CD8-positive, alpha-beta T cell (primary cell): ENCODE measurements at regions of chr1 and their contacts with region 1.

Region 1: GRCh38 chr1:117059678-117060440 is at the start of gene TTF2:
- DNase-seq: peak; percentile 88 to 99 (median 93)
- ATAC-seq: peak; percentile 87
- H3K4me3 ChIP-seq: peak within 1 kb of the TSS; percentile 75
- H3K4me3 Mint-ChIP-seq: no peak within 1 kb of the TSS
- H3K27ac ChIP-seq: peak within 1 kb of the TSS; percentile 70 to 92
- H3K27ac Mint-ChIP-seq: no peak within 1 kb of the TSS
- H3K4me1 ChIP-seq: peaks cover 22% of the 10 kb centered on the region
- H3K4me1 Mint-ChIP-seq: peaks cover 39% of the 10 kb centered on the region
- H3K27me3 ChIP-seq: no peaks in the 10 kb centered on the region
- H3K27me3 Mint-ChIP-seq: no peaks in the 10 kb centered on the region
- CTCF ChIP-seq: no peak
- total RNA-seq, gene TTF2: 31.5 to 33.2 TPM

Region 2: DNA sequence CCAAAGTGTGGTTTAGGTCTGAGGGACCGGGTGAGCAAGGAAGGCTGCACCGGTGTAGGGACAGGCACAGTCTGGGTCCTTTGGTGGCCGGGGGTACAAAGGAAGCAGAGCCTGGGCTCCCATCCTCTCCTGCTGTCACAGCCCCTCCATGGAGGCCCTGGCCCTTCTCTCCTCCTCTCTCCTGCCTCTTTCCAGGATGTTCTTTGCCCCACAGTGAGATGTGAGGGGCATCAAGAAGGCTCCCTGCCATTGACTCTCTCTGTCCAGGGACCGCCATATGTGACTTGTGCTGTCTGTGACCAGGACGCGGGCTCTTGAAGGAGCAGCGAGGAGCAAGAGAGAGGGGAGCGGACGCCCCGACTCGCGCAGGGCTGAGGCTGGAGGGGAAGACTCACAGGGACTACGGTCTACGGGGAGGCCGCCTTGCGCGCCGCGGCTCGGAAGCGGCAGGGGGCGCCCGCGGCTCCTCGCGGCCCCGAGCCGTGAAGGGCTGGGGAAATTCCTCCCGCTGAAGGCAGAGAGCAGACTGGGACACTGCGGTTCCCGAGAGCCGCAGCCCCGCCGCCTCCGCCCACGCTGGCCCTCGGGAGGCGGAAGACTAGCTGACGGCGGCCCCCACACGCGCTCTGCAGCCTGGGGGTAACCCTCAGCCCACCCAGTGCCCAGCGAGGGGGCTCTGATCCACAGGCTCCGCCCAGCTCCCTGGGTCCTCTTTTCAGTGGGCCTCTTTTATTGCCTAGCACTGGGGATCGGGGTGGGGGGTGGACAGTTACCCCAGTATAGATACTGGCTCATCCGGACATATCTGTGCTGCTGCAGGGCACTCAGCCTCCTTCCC is 907.9 kb before region 1 on chr1:
- CTCF ChIA-PET with region 1: no interaction called
- POLR2A ChIA-PET with region 1: no interaction called
- intact Hi-C with region 1: loop called in 1 of 2 experiments (anchors 10 kb)
- DNase-seq: peak; percentile 58 to 93 (median 76)
- ATAC-seq: peak; percentile 91
- H3K4me3 ChIP-seq: peak overlapping the region; percentile 35 to 52
- H3K4me3 Mint-ChIP-seq: peak overlapping the region; percentile 79
- H3K27ac ChIP-seq: peak overlapping the region; percentile 17 to 46
- H3K27ac Mint-ChIP-seq: peak overlapping the region; percentile 92
- H3K4me1 ChIP-seq: peaks cover 26% of the 10 kb centered on the region
- H3K4me1 Mint-ChIP-seq: peaks cover 30% of the 10 kb centered on the region
- H3K27me3 ChIP-seq: no peaks in the 10 kb centered on the region
- H3K27me3 Mint-ChIP-seq: no peaks in the 10 kb centered on the region
- CTCF ChIP-seq: peak; percentile 93

Region 3: GRCh38 chr1:116724765-116725375 is 335.0 kb before region 1 on chr1:
- CTCF ChIA-PET with region 1: interaction called, 59 read pairs
- POLR2A ChIA-PET with region 1: interaction called, 9 read pairs
- intact Hi-C with region 1: loop called (anchors 1 kb)
- DNase-seq: peak; percentile 52 to 86 (median 81)
- ATAC-seq: peak; percentile 75
- H3K4me3 ChIP-seq: no peak overlapping the region
- H3K4me3 Mint-ChIP-seq: no peak overlapping the region
- H3K27ac ChIP-seq: no peak overlapping the region
- H3K27ac Mint-ChIP-seq: no peak overlapping the region
- H3K4me1 ChIP-seq: no peaks in the 10 kb centered on the region
- H3K4me1 Mint-ChIP-seq: peaks cover 15% of the 10 kb centered on the region
- H3K27me3 ChIP-seq: no peaks in the 10 kb centered on the region
- H3K27me3 Mint-ChIP-seq: no peaks in the 10 kb centered on the region
- CTCF ChIP-seq: peak; percentile 97

Region 4: GRCh38 chr1:116769561-116769977 is 290.3 kb before region 1 on chr1:
- CTCF ChIA-PET with region 1: interaction called, 5 read pairs
- POLR2A ChIA-PET with region 1: interaction called, 14 read pairs
- intact Hi-C with region 1: no loop called
- DNase-seq: peak in 8 of 9 experiments; percentile 44 to 94 (median 76)
- ATAC-seq: peak; percentile 75
- H3K4me3 ChIP-seq: peak overlapping the region in 1 of 2 experiments; percentile 14
- H3K4me3 Mint-ChIP-seq: peak overlapping the region; percentile 55
- H3K27ac ChIP-seq: peak overlapping the region; percentile 42 to 87
- H3K27ac Mint-ChIP-seq: peak overlapping the region; percentile 96
- H3K4me1 ChIP-seq: peaks cover 83% of the 10 kb centered on the region
- H3K4me1 Mint-ChIP-seq: peaks cover 86% of the 10 kb centered on the region
- H3K27me3 ChIP-seq: no peaks in the 10 kb centered on the region
- H3K27me3 Mint-ChIP-seq: no peaks in the 10 kb centered on the region
- CTCF ChIP-seq: no peak

Region 5: DNA sequence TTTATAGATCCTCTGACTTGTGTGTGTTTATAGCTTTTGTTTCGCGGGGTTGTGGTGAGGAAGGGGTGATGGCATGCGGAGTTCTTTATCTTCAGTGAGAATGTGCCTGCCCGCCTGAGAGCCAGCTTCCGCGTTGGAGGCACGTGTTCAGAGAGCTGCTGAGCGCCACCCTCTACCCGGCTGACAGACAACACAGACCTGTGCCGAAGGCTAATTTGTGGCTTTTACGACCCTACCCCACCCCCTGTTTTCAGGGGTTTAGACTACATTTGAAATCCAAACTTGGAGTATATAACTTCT is 72.7 kb before region 1 on chr1:
- CTCF ChIA-PET with region 1: no interaction called
- POLR2A ChIA-PET with region 1: interaction called, 11 read pairs
- intact Hi-C with region 1: no loop called
- DNase-seq: peak; percentile 43 to 83 (median 74)
- ATAC-seq: peak; percentile 91
- H3K4me3 ChIP-seq: peak overlapping the region; percentile 29 to 53
- H3K4me3 Mint-ChIP-seq: peak overlapping the region; percentile 85
- H3K27ac ChIP-seq: peak overlapping the region; percentile 49 to 85
- H3K27ac Mint-ChIP-seq: peak overlapping the region; percentile 98
- H3K4me1 ChIP-seq: peaks cover 52% of the 10 kb centered on the region
- H3K4me1 Mint-ChIP-seq: peaks cover 69% of the 10 kb centered on the region
- H3K27me3 ChIP-seq: no peaks in the 10 kb centered on the region
- H3K27me3 Mint-ChIP-seq: no peaks in the 10 kb centered on the region
- CTCF ChIP-seq: no peak

Region 6: DNA sequence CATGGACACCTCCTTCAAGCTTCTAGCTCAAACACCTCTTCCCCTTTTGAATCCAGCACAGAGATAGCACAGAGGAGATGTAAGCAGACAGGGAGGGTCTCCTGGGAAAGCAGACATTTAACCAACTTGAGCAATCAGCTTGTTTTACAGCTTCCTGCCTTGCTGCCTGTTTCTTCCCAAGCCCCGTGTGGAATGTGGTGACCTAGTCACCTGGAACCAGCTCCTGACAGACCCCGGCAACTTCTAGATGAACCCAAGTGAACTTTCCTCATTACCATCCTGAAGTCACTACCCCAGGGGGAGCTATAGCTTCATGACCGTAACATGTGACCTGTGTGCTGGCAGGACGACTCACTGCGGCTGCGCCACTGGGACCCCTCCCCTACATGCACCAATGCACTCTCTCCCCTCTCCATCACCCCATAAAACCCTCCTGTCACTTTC is 23.8 kb before region 1 on chr1:
- CTCF ChIA-PET with region 1: no interaction called
- POLR2A ChIA-PET with region 1: no interaction called
- intact Hi-C with region 1: no loop called
- DNase-seq: no peak
- ATAC-seq: no peak
- H3K4me3 ChIP-seq: no peak overlapping the region
- H3K4me3 Mint-ChIP-seq: no peak overlapping the region
- H3K27ac ChIP-seq: no peak overlapping the region
- H3K27ac Mint-ChIP-seq: no peak overlapping the region
- H3K4me1 ChIP-seq: no peaks in the 10 kb centered on the region
- H3K4me1 Mint-ChIP-seq: peaks cover 12% of the 10 kb centered on the region
- H3K27me3 ChIP-seq: no peaks in the 10 kb centered on the region
- H3K27me3 Mint-ChIP-seq: no peaks in the 10 kb centered on the region
- CTCF ChIP-seq: no peak

Region 7: GRCh38 chr1:117605774-117606648 is 546.2 kb after region 1 on chr1 and contains the start of gene TENT5C:
- CTCF ChIA-PET with region 1: no interaction called
- POLR2A ChIA-PET with region 1: no interaction called
- intact Hi-C with region 1: loop called (anchors 1 to 5 kb)
- DNase-seq: peak; percentile 96 to 99 (median 99)
- ATAC-seq: peak; percentile 91
- H3K4me3 ChIP-seq: peak within 1 kb of the TSS; percentile 91 to 93
- H3K4me3 Mint-ChIP-seq: peak within 1 kb of the TSS; percentile 100
- H3K27ac ChIP-seq: peak within 1 kb of the TSS; percentile 95
- H3K27ac Mint-ChIP-seq: peak within 1 kb of the TSS; percentile 97
- H3K4me1 ChIP-seq: peaks cover 16% of the 10 kb centered on the region
- H3K4me1 Mint-ChIP-seq: peaks cover 36% of the 10 kb centered on the region
- H3K27me3 ChIP-seq: no peaks in the 10 kb centered on the region
- H3K27me3 Mint-ChIP-seq: no peaks in the 10 kb centered on the region
- CTCF ChIP-seq: no peak
- total RNA-seq, gene TENT5C: 146 to 150 TPM